ENCODE measurements at regions of chr3 and their contacts with region 1.

Region 1: GRCh38 chr3:46851364-46852333 is 11.6 kb downstream of the MYL3 start:
- DNase-seq: no peak
- ATAC-seq: no peak
- H3K4me3 ChIP-seq: no peak overlapping the region
- H3K4me3 Mint-ChIP-seq: no peak overlapping the region
- H3K27ac ChIP-seq: no peak overlapping the region
- H3K27ac Mint-ChIP-seq: no peak overlapping the region
- H3K4me1 ChIP-seq: peaks cover 4% of the 10 kb centered on the region
- H3K4me1 Mint-ChIP-seq: no peaks in the 10 kb centered on the region
- H3K27me3 ChIP-seq: no peaks in the 10 kb centered on the region
- H3K27me3 Mint-ChIP-seq: no peaks in the 10 kb centered on the region
- CTCF ChIP-seq: no peak

Region 2: DNA sequence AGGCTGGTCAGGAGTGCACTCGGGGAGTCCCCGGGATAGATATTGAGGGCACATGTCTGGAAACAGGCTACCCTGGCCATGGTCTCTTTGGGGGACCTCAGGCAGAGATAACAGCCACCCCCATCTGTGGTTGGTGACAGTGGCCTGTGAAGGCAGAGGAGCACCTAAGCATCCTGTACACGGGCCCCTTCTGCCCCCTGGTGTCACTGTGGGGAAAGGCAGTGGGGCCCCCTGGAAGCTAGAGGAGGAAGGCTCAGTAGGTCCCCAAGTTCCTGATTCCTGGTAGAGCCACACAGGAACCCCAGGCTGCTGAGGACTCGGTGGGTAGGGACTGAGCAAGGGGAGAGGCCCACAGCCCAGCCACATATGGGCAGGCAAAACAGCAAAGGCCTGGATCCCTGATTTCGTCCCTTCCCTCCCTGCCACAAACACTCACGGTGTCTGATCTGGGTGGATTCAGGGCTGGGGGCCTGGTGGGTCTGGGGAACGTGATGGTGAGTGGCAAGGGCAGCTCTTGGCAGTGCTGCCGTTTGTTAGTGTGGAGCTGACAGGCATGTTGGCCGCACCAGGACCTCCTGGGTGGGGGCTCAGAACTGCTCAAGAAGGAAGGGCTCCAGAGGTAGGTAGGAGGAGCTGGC is 922.5 kb before region 1 on chr3:
- CTCF ChIA-PET with region 1: no interaction called
- POLR2A ChIA-PET with region 1: no interaction called
- intact Hi-C with region 1: no loop called
- DNase-seq: peak; percentile 49 to 79 (median 62)
- ATAC-seq: peak; percentile 99
- H3K4me3 ChIP-seq: no peak overlapping the region
- H3K4me3 Mint-ChIP-seq: no peak overlapping the region
- H3K27ac ChIP-seq: no peak overlapping the region
- H3K27ac Mint-ChIP-seq: peak overlapping the region; percentile 30
- H3K4me1 ChIP-seq: peaks cover 7% of the 10 kb centered on the region
- H3K4me1 Mint-ChIP-seq: peaks cover 5% of the 10 kb centered on the region
- H3K27me3 ChIP-seq: no peaks in the 10 kb centered on the region
- H3K27me3 Mint-ChIP-seq: no peaks in the 10 kb centered on the region
- CTCF ChIP-seq: peak; percentile 72

Region 3: DNA sequence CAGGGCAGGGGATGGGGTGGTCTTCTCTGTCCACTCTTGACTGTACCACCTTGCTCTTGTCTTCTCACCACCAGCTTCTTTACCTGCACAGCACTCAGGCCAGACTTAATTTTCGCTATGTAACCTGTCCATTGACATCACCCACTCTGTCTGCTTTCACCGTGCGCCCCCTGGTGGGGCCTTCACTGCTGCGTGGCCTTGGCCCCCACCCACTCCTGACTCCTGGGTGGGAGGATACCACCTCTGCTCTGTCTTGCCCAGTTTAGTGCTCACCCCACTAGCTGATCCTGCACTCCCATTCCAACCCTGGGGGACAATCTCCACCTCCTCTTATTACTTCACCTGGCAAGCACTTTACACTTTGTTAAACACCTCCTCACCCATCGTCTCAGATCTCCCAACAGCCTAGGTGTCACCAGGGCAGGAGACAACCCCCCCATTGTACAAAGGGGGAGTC is 43.6 kb after region 1 on chr3:
- CTCF ChIA-PET with region 1: no interaction called
- POLR2A ChIA-PET with region 1: no interaction called
- intact Hi-C with region 1: loop called in 1 of 2 experiments (anchors 5 kb)
- DNase-seq: peak; percentile 69 to 87 (median 76)
- ATAC-seq: peak; percentile 92
- H3K4me3 ChIP-seq: no peak overlapping the region
- H3K4me3 Mint-ChIP-seq: no peak overlapping the region
- H3K27ac ChIP-seq: no peak overlapping the region
- H3K27ac Mint-ChIP-seq: no peak overlapping the region
- H3K4me1 ChIP-seq: peaks cover 18% of the 10 kb centered on the region
- H3K4me1 Mint-ChIP-seq: no peaks in the 10 kb centered on the region
- H3K27me3 ChIP-seq: peaks cover 42 to 43% of the 10 kb centered on the region in 2 experiments
- H3K27me3 Mint-ChIP-seq: peaks cover 81% of the 10 kb centered on the region
- CTCF ChIP-seq: peak; percentile 82

Region 4: GRCh38 chr3:47047673-47048072 is 196.0 kb after region 1 on chr3:
- CTCF ChIA-PET with region 1: no interaction called
- POLR2A ChIA-PET with region 1: no interaction called
- intact Hi-C with region 1: no loop called
- DNase-seq: no peak
- ATAC-seq: no peak
- H3K4me3 ChIP-seq: no peak overlapping the region
- H3K4me3 Mint-ChIP-seq: no peak overlapping the region
- H3K27ac ChIP-seq: no peak overlapping the region
- H3K27ac Mint-ChIP-seq: peak overlapping the region; percentile 36
- H3K4me1 ChIP-seq: no peaks in the 10 kb centered on the region
- H3K4me1 Mint-ChIP-seq: peaks cover 7% of the 10 kb centered on the region
- H3K27me3 ChIP-seq: no peaks in the 10 kb centered on the region
- H3K27me3 Mint-ChIP-seq: no peaks in the 10 kb centered on the region
- CTCF ChIP-seq: no peak

Measured in CD4-positive, alpha-beta T cell (primary cell).